Head of caudate nucleus (tissue), 42 donors: ENCODE measurements at regions of chr9 and their contacts with region 1.

Region 1: DNA sequence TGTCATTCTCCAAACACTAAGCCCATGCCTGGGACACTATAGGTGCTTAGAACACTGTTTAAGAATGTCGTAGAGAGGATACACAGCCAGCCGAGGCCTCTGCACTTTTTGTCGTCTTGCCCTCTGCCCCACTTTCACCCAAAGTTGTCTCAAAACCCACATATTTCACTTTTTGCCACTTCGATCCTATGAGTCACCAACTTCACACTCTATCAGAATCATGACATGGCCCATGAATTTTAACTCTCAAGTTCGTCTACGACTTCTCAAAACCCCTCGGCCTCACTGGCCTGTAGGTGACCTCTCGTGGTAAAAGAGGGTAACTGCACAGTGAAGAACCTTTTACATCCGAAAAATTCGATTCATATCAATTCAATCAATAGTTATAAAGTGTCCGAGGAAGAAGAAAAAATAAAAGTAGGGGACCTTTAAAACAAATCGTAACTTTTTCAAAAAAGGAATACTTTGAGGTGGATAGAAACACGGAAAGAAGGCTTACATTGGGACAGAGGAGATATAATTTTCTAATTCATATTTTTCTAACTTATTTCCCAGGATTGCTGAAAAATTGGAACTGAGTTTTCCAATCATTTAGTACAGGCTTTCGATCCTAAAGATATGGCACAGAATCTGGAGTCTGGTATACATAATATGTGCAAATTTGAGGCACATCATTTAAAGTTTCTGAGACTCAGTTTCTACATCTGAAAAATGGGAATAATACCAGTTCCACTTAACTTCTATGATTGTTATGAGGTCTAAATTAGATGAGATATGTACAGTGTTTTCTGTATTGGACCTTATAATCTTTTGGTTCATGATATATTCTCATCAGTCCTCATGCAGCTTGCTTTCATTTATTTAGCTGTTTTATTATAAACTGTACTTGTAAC is 122.6 kb downstream of the APBA1 start:
- DNase-seq: peak in 27 of 42 donors; percentile 4 to 71 (median 45)

Region 2: DNA sequence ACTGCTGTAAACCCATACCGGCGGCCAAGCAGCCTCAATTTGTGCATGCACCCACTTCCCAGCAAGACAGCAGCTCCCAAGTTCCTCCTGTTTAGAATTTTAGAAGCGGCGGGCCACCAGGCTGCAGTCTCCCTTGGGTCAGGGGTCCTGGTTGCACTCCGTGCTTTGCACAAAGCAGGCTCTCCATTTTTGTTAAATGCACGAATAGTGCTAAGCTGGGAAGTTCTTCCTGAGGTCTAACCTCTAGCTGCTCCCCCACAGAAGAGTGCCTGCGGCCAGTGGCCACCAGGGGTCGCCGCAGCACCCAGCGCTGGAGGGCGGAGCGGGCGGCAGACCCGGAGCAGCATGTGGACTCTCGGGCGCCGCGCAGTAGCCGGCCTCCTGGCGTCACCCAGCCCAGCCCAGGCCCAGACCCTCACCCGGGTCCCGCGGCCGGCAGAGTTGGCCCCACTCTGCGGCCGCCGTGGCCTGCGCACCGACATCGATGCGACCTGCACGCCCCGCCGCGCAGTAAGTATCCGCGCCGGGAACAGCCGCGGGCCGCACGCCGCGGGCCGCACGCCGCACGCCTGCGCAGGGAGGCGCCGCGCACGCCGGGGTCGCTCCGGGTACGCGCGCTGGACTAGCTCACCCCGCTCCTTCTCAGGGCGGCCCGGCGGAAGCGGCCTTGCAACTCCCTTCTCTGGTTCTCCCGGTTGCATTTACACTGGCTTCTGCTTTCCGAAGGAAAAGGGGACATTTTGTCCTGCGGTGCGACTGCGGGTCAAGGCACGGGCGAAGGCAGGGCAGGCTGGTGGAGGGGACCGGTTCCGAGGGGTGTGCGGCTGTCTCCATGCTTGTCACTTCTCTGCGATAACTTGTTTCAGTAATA is 513.9 kb before region 1 on chr9 and contains the start of gene FXN:
- intact Hi-C with region 1: loop called (anchors 10 kb)
- DNase-seq: peak; percentile 50 to 91 (median 84)

Region 3: DNA sequence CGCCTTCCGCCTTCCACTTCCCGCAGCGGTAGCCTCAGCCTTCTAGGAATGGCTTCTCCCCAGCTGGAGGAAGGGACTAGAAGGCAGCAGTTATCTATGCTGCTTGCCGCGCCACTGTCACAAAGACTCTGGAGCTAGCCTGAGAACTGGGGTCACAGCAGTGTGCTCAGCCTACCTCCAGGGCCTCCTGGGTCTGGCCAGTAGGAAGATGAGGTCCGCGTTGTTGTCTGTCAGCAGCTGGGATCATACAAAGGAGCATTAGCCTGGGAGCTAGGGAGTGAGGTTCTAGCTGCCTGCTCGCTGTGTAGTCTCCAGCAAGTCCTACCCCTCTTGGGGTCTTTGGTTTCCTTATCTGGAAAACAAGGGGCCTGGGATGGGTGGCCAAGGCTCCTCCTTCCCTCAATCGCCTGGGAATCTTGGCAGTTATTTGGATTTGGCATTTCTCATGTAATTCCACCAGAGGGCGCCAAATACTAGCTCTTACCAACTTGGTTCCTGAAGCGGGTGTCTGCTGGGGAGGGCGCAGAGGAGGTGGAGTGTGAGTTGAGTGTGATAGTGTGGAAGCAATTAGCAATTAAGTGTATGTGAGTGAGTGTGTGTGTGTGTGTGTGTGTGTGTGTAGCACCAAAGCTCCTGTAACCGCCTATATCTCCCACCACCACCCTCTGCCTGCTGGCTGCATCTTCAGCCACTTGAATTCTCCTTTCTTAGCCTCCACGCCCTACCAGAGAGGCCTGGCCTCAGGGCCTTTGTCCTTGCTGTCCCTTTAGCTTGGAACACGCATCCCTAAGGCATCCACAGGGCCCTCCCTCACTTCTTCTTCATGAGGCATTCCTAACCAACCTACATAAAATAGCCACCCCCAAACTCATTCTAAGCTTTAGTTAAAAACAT is 127.4 kb before region 1 on chr9:
- intact Hi-C with region 1: loop called (anchors 2 kb)
- DNase-seq: peak; percentile 45 to 92 (median 78)

Region 4: DNA sequence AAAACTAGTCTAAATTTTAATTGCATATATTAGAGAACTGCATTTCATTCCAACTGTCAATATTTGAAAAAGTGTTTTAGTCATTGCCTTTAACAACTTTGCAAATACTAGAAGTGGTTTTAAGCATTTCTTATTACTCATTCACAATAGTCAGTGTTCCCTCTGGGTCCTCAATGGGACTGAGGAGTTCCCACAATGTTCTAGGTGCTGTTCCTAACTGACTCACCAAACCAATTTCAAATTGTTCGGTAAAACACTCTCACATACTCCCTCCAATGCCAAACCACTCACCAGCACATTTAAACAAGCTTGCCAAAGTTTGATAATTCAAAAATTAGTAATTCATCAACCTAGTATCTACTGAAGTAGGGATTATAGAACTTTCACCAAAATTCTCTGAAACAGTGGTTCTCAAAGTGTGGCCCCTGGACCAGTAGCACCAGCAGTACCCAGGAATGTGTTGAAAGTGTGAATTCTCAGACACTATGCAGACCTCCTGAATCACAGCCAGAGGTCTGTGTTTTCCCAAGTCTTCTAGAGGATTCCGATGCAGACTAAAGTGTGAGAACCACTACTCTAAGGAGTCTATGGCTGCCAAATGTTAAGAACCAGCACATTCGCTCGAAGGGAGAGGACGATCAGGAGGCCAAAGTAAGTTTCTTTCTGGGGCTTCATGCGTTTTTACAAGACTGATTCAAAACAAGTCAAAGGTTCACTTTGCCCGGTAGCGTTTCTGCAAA is 49.8 kb after region 1 on chr9:
- intact Hi-C with region 1: no loop called
- DNase-seq: no peak

Region 5: DNA sequence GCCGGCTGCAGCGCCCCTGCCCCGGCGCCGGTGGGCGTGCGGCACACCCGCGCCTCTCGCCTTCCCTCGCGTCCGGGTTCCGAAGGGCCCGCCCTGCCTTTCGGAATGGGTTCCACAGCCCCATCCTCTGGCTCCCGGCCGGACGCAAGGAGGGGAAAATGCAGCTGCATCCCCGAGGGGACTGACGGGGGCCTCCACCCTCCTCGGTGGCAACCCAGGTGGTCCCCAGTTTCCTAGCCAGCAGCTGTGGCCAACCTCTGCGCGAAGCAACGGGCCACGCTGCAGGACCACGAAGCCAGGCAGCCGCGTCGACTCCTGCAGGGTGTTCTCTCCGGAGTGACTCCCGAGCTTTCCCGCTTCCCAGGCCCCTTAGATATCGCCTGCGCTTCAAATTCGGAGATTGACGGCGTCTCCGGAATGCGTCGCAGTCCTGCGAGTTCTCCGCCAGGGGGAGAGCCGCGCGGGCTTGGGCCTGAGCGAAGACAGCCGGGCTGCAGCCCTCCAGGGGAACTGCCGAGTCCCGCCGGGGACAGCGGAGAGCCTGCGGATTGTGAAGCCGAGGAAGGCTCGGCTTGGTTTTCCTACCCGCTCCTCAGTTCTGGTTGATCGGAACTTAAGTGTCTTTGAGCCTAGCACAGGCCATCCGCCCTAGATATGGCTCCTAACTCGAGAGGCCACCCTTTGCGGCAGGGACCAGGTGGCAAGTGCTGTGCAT is 123.2 kb after region 1 on chr9:
- intact Hi-C with region 1: loop called (anchors 10 kb)
- DNase-seq: peak; percentile 67 to 95 (median 88)

Region 6: GRCh38 chr9:70816316-70816715 is 1266.8 kb after region 1 on chr9:
- intact Hi-C with region 1: no loop called
- DNase-seq: no peak